ENCODE measurements at regions of chr10 and their contacts with region 1.

Region 1: DNA sequence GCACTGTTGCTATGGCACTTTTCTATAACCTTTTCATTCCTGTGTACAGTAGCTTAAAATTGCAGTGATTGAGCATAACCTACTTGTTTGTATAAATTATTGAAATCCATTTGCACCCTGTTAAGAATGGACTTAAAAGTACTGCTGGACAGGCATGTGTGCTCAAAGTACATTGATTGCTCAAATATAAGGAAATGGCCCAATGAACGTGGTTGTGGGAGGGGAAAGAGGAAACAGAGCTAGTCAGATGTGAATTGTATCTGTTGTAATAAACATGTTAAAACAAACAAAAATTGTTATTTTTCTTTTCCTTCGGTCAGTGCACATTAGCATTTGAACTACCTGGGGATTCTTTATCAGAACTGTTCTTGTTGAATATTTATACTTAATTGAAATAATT is 57.1 kb upstream of the BAMBI start:
- DNase-seq: no peak
- H3K4me3 Mint-ChIP-seq: no peak overlapping the region
- H3K27ac Mint-ChIP-seq: no peak overlapping the region
- H3K4me1 Mint-ChIP-seq: no peaks in the 10 kb centered on the region
- H3K27me3 Mint-ChIP-seq: no peaks in the 10 kb centered on the region

Region 2: DNA sequence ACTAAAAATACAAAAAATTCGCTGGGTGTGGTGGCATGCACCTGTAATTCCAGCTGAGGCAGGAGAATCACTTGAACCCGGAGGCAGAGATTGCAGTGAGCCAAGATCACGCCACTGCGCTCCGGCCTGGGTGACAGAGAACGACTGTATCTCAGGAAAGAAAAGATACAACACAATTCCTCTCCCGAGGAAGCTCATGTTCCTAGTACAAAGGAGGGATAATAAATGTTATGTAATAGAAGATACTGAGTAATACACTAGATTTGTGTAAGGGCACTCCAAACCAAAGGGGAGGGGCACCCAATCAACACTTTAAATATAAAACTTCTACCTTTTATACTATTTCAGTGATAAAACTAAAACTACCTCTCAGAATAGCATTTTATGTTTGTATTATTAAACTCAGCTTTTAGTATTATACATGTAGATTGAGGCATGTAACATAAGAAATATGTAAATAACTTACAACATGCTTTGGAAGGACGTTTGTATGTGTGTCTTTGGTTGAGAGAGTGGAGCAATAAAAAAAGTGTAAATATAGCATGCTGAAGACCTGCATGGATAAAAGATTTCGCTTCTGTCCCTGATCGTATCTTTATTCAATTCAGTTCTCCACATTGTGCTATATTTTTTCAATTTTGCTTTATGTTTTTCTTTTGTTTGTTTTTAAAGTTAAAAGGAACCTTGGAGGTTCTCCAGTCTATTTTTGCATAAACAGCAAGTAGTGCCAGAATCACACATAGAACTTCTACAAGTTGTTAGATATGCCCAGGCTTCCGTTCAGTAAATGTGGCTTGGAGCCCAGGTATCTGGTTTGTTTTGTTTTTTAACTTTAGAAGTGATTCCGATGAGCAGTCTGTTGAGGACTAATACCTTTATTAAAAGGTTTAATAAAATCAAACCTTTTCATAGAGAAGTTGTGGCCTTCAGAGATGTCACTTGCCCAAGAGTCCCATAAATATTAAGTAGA is 15.4 kb before region 1 on chr10:
- CTCF ChIA-PET with region 1: interaction called, 10 read pairs
- POLR2A ChIA-PET with region 1: no interaction called
- DNase-seq: no peak
- H3K4me3 Mint-ChIP-seq: no peak overlapping the region
- H3K27ac Mint-ChIP-seq: no peak overlapping the region
- H3K4me1 Mint-ChIP-seq: peaks cover 19% of the 10 kb centered on the region
- H3K27me3 Mint-ChIP-seq: no peaks in the 10 kb centered on the region

Region 3: GRCh38 chr10:28637346-28637745 is 17.1 kb after region 1 on chr10:
- CTCF ChIA-PET with region 1: no interaction called
- POLR2A ChIA-PET with region 1: no interaction called
- DNase-seq: no peak
- H3K4me3 Mint-ChIP-seq: no peak overlapping the region
- H3K27ac Mint-ChIP-seq: no peak overlapping the region
- H3K4me1 Mint-ChIP-seq: no peaks in the 10 kb centered on the region
- H3K27me3 Mint-ChIP-seq: peaks cover 7% of the 10 kb centered on the region

Measured in activated CD4-positive, alpha-beta memory T cell treated with anti-CD3 and anti-CD28 coated beads, Interleukin-2, amount 10 ng/mL, durations not matched to agents 7 days and 5 days (primary cell).